Activated B cell treated with CpG ODN at 0.5 μM for 24 hours (primary cell): ENCODE measurements at regions of chr6 and their contacts with region 1.

Region 1: DNA sequence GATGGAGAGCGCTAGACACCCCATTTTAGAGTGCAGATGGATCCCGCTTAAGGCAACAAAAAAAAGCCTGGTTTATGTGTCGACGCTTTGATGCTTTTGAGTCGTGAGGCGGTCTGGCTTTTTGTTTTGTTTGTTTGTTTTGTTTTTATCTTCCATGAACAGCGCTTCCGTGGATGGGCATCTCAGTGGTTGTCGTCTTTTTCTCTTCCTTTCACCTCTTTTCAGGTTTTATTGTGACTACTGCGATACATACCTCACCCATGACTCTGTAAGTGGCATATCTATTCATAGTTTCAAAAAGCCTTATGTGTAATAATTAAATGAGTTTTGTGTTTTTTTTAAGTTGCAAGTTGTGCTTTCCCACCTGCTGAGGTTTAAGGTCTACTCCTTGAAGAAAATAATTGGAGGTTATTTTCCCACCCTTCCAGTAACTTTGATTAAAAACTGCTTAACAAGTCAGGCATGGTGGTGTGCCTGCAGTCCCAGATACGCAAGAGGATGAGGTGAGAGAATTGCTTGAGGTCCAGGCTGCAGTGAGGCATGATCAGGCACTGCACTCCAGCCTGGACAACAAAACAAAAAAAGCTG is 476 bp downstream of the SNRPC start:
- DNase-seq: no peak
- ATAC-seq: no peak
- H3K4me3 Mint-ChIP-seq: no peak overlapping the region
- H3K27ac Mint-ChIP-seq: no peak overlapping the region
- H3K4me1 Mint-ChIP-seq: peaks cover 16% of the 10 kb centered on the region
- H3K27me3 Mint-ChIP-seq: no peaks in the 10 kb centered on the region
- CTCF ChIP-seq: no peak

Region 2: DNA sequence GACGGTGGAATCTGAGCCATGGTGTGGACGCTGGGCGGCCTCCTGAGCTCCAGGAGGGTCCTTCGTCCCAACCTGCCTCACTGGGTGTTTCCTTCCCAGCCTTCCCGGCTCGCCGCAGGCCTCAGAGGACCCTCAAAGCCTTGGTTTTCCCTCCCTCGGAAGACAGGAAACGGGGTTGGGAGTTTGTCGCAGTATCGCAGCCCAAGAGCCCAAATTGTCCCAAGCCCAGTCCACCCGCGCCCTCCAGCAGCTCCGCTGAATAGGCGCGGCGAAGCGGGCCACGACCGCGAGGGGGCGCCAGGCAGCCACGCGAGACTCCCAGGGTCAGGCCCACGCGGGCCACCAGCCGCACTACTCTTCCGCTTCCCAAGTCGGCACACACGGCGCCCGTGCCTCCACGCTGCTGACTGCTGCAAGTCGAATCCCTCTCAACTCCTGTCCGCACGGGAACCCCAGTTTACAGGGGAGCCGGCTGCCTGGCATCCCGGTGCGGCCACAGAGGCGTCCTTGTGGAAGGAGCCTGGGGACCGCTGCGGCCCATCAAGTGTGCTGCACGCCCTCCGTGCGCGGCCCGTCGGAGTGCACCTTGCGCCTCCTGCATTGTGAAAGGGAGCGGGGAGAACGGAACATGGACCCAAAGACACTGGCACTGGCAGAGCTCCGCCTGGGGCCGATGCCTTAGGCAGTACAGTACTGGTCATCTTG is 561.5 kb before region 1 on chr6:
- CTCF ChIA-PET with region 1: no interaction called
- POLR2A ChIA-PET with region 1: no interaction called
- intact Hi-C with region 1: loop called (anchors 1 kb)
- DNase-seq: peak; percentile 94
- ATAC-seq: peak; percentile 99
- H3K4me3 Mint-ChIP-seq: peak overlapping the region; percentile 91
- H3K27ac Mint-ChIP-seq: peak overlapping the region; percentile 83
- H3K4me1 Mint-ChIP-seq: peaks cover 8% of the 10 kb centered on the region
- H3K27me3 Mint-ChIP-seq: no peaks in the 10 kb centered on the region
- CTCF ChIP-seq: peak; percentile 78

Region 3: DNA sequence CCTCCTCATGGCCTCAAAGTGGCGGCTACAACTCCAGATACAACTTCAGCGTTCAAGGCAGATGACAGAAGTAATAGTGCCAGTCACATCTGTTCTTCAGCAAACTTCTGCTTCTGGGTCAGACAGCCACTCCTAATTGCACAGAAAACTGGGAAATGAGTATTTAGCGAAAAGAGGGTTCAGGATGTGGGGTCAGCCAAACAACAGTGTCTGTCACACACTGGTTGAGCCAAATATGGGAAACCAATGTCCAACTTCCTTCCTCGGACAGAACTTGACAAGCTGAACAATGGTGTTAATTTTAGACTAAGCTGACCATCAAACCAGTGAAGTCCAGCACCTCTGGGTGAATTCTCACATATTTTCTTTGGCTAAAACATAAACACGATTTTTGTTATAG is 387.4 kb before region 1 on chr6:
- CTCF ChIA-PET with region 1: no interaction called
- POLR2A ChIA-PET with region 1: no interaction called
- intact Hi-C with region 1: no loop called
- DNase-seq: no peak
- ATAC-seq: no peak
- H3K4me3 Mint-ChIP-seq: no peak overlapping the region
- H3K27ac Mint-ChIP-seq: no peak overlapping the region
- H3K4me1 Mint-ChIP-seq: peaks cover 36% of the 10 kb centered on the region
- H3K27me3 Mint-ChIP-seq: no peaks in the 10 kb centered on the region
- CTCF ChIP-seq: no peak

Region 4: GRCh38 chr6:34425498-34426410 is 332.0 kb before region 1 on chr6 and contains the start of gene RPS10:
- CTCF ChIA-PET with region 1: no interaction called
- POLR2A ChIA-PET with region 1: no interaction called
- intact Hi-C with region 1: loop called (anchors 5 kb)
- DNase-seq: peak; percentile 97
- ATAC-seq: peak; percentile 99
- H3K4me3 Mint-ChIP-seq: peak within 1 kb of the TSS; percentile 97
- H3K27ac Mint-ChIP-seq: peak within 1 kb of the TSS; percentile 97
- H3K4me1 Mint-ChIP-seq: peaks cover 29% of the 10 kb centered on the region
- H3K27me3 Mint-ChIP-seq: no peaks in the 10 kb centered on the region
- CTCF ChIP-seq: no peak
- total RNA-seq, gene RPS10: 2,903 and 3,402 TPM in 2 replicates

Region 5: DNA sequence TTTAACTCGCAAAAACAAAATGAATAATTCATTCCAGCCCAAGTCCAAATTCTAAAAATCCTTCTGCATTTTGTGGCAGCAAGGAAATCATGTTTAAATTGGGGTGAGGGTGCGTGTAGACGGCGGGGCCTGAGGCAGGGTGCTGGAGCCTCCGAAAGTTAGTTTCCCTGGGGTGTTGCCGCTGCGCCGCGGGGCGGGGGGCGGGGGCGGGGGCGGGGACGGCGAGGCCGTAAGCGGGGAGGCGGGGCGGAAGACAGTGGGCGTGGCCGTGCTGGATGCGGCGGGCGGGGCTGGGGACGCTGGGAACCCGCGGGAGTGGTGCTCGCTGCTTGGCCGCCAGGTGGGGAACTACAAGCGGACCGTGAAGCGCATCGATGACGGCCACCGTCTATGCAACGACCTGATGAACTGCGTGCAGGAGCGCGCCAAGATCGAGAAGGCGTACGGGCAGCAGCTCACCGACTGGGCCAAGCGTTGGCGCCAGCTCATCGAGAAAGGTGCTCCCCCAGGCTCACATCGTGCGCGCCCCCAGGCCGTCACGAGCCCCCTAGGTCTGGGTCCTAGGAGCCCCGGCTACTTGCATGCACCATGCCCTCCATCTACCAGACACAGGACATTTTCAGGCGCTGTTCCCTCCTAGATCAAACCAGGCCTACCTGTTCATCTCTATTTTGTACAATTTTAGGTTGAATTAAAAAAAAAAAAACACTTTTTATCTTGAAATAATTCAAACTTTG is 230.6 kb before region 1 on chr6:
- CTCF ChIA-PET with region 1: no interaction called
- POLR2A ChIA-PET with region 1: interaction called, 4 read pairs
- intact Hi-C with region 1: loop called (anchors 10 kb)
- DNase-seq: peak; percentile 92
- ATAC-seq: peak; percentile 98
- H3K4me3 Mint-ChIP-seq: peak overlapping the region; percentile 69
- H3K27ac Mint-ChIP-seq: peak overlapping the region; percentile 66
- H3K4me1 Mint-ChIP-seq: peaks cover 7% of the 10 kb centered on the region
- H3K27me3 Mint-ChIP-seq: no peaks in the 10 kb centered on the region
- CTCF ChIP-seq: no peak

Region 6: GRCh38 chr6:34560366-34561226 is 197.2 kb before region 1 on chr6:
- CTCF ChIA-PET with region 1: no interaction called
- POLR2A ChIA-PET with region 1: no interaction called
- intact Hi-C with region 1: no loop called
- DNase-seq: no peak
- ATAC-seq: no peak
- H3K4me3 Mint-ChIP-seq: no peak overlapping the region
- H3K27ac Mint-ChIP-seq: no peak overlapping the region
- H3K4me1 Mint-ChIP-seq: no peaks in the 10 kb centered on the region
- H3K27me3 Mint-ChIP-seq: peaks cover 2% of the 10 kb centered on the region
- CTCF ChIP-seq: no peak

Region 7: DNA sequence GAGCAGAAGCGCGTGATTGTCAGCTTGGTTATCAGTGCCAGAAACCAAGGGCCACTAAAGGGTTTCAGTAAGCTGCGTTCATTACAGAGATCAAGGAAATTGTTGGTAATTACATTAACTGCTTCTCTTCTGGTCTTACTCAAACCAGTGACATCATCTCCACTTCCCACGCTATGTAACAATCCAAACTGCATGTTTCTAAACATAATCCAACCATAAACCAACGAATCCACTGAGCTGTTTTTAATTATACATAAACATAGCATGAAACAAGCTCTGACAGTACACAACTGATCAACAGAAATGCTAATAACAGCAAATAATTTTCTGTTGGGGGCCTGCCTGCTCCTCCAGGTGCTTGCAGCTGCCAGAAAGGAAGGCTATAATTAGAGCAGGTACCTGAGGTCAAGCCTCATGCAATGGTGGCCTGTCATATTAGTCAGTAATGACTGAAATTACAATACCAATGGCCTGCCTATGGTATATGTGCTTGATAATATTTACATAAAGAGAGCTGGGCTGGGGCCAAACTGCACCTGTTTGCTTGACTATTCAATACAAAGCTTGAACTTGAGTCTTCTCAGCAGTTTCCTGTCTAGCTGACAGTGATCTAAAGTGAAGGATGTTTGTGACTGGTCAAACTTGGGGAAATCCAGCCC is 101.3 kb before region 1 on chr6:
- CTCF ChIA-PET with region 1: no interaction called
- POLR2A ChIA-PET with region 1: interaction called, 12 read pairs
- intact Hi-C with region 1: loop called (anchors 2 kb)
- DNase-seq: no peak
- ATAC-seq: peak; percentile 79
- H3K4me3 Mint-ChIP-seq: peak overlapping the region; percentile 74
- H3K27ac Mint-ChIP-seq: peak overlapping the region; percentile 92
- H3K4me1 Mint-ChIP-seq: peaks cover 58% of the 10 kb centered on the region
- H3K27me3 Mint-ChIP-seq: no peaks in the 10 kb centered on the region
- CTCF ChIP-seq: no peak

Region 8: GRCh38 chr6:34696739-34697543 is 60.8 kb before region 1 on chr6 and contains the start of gene ILRUN:
- CTCF ChIA-PET with region 1: interaction called, 4 read pairs
- POLR2A ChIA-PET with region 1: interaction called, 25 read pairs
- intact Hi-C with region 1: loop called (anchors 1 kb)
- DNase-seq: peak; percentile 95
- ATAC-seq: peak; percentile 87
- H3K4me3 Mint-ChIP-seq: peak within 1 kb of the TSS; percentile 98
- H3K27ac Mint-ChIP-seq: peak within 1 kb of the TSS; percentile 99
- H3K4me1 Mint-ChIP-seq: peaks cover 47% of the 10 kb centered on the region
- H3K27me3 Mint-ChIP-seq: no peaks in the 10 kb centered on the region
- CTCF ChIP-seq: no peak
- total RNA-seq, gene ILRUN: 71.0 and 84.4 TPM in 2 replicates

Region 9: DNA sequence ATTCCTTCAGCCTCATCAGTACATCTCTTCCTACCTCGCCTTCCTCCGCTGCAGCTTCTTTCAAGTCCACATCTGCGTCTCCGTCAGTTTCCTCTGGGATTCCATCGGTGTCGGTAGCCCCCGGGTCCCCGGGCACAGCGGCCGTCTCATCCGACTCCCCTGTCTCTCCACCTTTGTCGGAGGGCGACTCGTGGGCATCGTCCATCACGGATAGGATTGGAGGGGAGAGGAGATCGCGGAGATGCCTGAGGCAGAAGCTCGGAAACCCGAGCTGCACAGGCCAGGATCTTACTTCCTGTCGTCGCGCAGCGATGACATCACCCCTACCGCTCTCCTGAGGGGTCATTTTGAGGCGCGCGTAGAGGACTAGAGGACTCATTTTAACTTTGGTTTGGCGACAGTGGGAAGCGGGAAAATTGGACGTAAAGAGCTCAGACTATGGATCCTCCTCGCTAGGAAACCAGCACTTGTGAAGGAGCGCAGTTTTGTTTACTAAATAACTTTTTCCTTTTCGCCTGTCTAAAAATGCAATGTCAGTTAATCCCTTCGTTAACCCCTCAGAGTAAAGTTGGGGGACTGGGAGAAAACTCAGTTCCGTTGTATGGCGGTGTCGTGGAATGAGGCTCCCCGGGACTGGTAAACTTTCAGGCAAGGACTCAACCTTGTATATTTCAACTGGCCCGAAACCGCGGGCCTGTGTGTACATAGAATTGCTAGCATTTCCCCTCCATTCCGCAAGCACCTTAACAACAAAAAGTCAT is 130.2 kb after region 1 on chr6 and contains the start of gene TAF11:
- CTCF ChIA-PET with region 1: no interaction called
- POLR2A ChIA-PET with region 1: interaction called, 33 read pairs
- intact Hi-C with region 1: loop called (anchors 1 kb)
- DNase-seq: peak; percentile 82
- ATAC-seq: peak; percentile 67
- H3K4me3 Mint-ChIP-seq: peak within 1 kb of the TSS; percentile 98
- H3K27ac Mint-ChIP-seq: peak within 1 kb of the TSS; percentile 97
- H3K4me1 Mint-ChIP-seq: peaks cover 52% of the 10 kb centered on the region
- H3K27me3 Mint-ChIP-seq: no peaks in the 10 kb centered on the region
- CTCF ChIP-seq: no peak
- total RNA-seq, gene TAF11: 27.6 and 28.0 TPM in 2 replicates

Region 10: DNA sequence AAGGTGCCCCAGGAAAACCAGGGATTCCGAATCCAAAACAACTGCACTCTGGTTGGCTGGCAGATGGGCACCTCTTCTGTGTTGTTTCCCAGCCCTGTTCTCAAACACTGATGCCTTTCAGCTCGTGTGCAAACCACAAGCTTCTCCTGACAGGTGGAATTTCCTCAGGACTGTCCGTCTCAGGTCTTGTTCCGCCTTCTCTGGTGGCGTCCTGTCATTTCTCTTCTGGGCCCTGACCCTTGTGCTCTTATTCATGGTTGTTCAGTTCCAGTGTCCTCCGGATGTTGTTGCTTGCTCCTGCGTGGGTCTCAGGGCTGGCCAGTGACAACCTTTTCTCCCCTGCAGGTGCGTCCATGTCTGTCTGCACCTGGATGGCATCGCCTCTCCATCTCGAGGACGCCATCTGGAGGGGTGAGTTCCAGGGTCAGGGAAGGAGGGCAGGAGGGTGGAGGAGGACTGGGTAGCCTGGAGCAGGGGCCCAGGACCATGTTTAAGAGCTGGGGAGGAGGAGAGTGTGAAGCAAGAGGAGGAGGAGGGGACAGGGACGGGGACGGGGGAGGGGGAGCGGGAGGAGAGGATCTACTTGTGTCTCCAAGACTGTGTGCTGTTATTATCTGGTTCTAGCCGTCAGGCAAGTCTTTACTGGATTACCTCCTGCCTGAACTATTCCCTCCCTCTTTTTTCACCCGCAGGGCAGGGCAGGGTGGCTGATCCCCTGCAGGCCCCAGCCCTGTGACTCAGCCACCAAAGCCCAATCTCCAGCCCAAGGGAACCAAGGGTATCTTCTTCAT is 786.9 kb after region 1 on chr6:
- CTCF ChIA-PET with region 1: no interaction called
- POLR2A ChIA-PET with region 1: no interaction called
- intact Hi-C with region 1: no loop called
- DNase-seq: no peak
- ATAC-seq: no peak
- H3K4me3 Mint-ChIP-seq: no peak overlapping the region
- H3K27ac Mint-ChIP-seq: no peak overlapping the region
- H3K4me1 Mint-ChIP-seq: no peaks in the 10 kb centered on the region
- H3K27me3 Mint-ChIP-seq: peaks cover 7% of the 10 kb centered on the region
- CTCF ChIP-seq: no peak